WTC11 (cell line): ENCODE measurements at regions of chr1 and their contacts with region 1.

Region 1: DNA sequence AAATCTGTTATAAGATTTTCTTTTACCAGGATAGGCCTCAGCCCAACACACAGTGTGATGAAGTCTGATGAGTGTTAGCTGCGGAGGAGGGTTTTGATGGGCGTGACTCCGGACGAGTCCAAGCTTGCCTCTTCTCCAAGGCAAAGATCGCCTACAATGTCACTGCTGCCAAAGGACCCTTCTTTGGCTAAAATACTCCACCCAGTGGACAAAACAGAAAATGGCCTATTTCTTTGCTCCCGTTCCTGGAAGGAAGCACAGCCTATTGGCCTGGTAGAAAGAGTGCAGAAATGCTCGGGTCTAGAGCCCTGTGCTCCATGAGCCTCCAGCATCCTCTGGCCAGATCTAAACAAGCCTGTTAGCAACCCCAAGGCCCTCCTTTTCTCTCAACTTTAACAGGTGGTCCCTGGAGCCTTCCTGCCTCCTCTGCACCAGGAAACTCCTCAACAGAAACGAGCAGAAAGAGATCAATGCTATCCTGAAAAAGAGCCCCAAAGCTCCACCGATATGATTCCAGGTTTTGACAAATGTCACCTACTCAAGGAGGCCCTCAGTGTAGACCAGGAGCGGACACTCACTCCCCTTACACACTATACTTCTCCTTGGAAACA is 3.4 kb upstream of the CASQ2 start:
- DNase-seq: peak; percentile 48
- ATAC-seq: peak; percentile 95
- H3K4me3 Mint-ChIP-seq: peak overlapping the region; percentile 29
- H3K27ac Mint-ChIP-seq: no peak overlapping the region
- H3K4me1 Mint-ChIP-seq: peaks cover 7% of the 10 kb centered on the region
- H3K27me3 Mint-ChIP-seq: no peaks in the 10 kb centered on the region
- CTCF ChIP-seq: peak; percentile 48

Region 2: DNA sequence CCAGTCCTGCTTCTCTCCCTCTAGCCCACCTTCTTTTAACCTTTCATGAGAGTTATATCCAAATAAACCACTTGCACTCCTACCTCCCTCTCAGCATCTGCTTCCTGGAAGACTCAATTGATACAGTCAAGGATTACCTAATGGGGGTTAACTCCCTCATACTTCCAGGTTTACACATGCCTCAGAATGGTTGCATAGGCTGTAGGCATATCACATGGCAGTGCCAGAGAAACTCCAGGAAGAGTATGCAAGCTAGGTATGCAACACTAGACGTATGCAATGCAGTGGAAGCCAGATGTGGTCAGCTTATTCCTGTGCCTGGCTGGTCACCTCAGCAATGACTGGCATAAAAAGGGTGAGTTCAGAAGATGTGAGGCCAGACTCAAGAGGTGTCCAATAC is 162.9 kb before region 1 on chr1:
- CTCF ChIA-PET with region 1: interaction called, 24 read pairs
- POLR2A ChIA-PET with region 1: no interaction called
- DNase-seq: no peak
- ATAC-seq: no peak
- H3K4me3 Mint-ChIP-seq: no peak overlapping the region
- H3K27ac Mint-ChIP-seq: no peak overlapping the region
- H3K4me1 Mint-ChIP-seq: peaks cover 6% of the 10 kb centered on the region
- H3K27me3 Mint-ChIP-seq: no peaks in the 10 kb centered on the region
- CTCF ChIP-seq: no peak

Region 3: DNA sequence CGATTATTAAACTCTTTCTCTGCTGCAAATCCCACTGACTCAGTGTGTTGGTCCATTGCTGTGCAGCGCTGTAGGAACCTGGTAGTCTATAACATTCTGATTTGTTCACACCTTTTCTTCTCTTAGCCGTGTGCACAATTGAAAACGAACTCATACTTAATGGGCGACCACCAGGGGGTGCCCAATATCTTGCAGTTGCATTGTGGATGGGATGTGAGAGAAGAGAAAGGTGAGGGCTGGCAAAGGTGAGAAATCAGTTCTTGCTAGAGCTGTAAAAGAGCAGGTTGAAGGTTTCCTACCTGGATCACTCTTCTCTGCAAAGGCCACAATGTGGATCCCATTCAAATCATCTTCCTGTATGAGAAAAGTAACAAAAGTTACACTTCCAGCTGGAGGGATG is 54.4 kb before region 1 on chr1:
- CTCF ChIA-PET with region 1: interaction called, 88 read pairs
- POLR2A ChIA-PET with region 1: no interaction called
- DNase-seq: peak; percentile 77
- ATAC-seq: peak; percentile 53
- H3K4me3 Mint-ChIP-seq: no peak overlapping the region
- H3K27ac Mint-ChIP-seq: no peak overlapping the region
- H3K4me1 Mint-ChIP-seq: peaks cover 23% of the 10 kb centered on the region
- H3K27me3 Mint-ChIP-seq: peaks cover 3% of the 10 kb centered on the region; the same call in 1 of the 2 replicates
- CTCF ChIP-seq: peak; percentile 66

Region 4: GRCh38 chr1:115782571-115783281 is 10.8 kb after region 1 on chr1:
- CTCF ChIA-PET with region 1: interaction called, 21 read pairs
- POLR2A ChIA-PET with region 1: interaction called, 5 read pairs
- DNase-seq: no peak
- ATAC-seq: peak; percentile 69
- H3K4me3 Mint-ChIP-seq: no peak overlapping the region
- H3K27ac Mint-ChIP-seq: no peak overlapping the region
- H3K4me1 Mint-ChIP-seq: no peaks in the 10 kb centered on the region; the same call in 1 of the 2 replicates
- H3K27me3 Mint-ChIP-seq: no peaks in the 10 kb centered on the region
- CTCF ChIP-seq: no peak

Region 5: DNA sequence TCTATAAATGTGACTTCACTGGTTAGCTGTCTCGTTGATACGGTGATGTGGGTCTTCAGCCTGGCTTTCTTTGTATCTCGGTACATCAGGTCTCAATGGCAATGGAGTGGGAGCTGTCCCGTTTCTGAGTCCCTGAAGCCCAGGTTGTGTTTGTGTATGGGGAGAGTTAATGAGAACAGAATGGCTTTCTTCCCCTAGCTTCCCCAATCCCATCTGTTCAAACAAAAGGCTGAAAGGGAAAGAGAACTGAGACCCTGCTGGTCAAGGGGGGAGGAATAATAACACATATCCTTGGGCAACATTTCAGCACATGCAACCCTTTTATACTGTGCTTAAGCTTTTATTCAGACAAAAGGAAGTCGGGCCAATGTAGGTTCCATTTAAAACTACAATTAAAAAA is 24.9 kb after region 1 on chr1:
- CTCF ChIA-PET with region 1: interaction called, 10 read pairs
- POLR2A ChIA-PET with region 1: no interaction called
- DNase-seq: no peak
- ATAC-seq: peak; percentile 87
- H3K4me3 Mint-ChIP-seq: no peak overlapping the region
- H3K27ac Mint-ChIP-seq: peak overlapping the region; percentile 77
- H3K4me1 Mint-ChIP-seq: peaks cover 49% of the 10 kb centered on the region
- H3K27me3 Mint-ChIP-seq: no peaks in the 10 kb centered on the region
- CTCF ChIP-seq: no peak

Region 6: GRCh38 chr1:115980998-115981993 is 209.3 kb after region 1 on chr1:
- CTCF ChIA-PET with region 1: interaction called, 28 read pairs
- POLR2A ChIA-PET with region 1: no interaction called
- DNase-seq: peak; percentile 41
- ATAC-seq: peak; percentile 55
- H3K4me3 Mint-ChIP-seq: no peak overlapping the region
- H3K27ac Mint-ChIP-seq: no peak overlapping the region
- H3K4me1 Mint-ChIP-seq: peaks cover 34% of the 10 kb centered on the region
- H3K27me3 Mint-ChIP-seq: no peaks in the 10 kb centered on the region
- CTCF ChIP-seq: peak; percentile 73